ENCODE measurements at regions of chr11 and their contacts with region 1.

Region 1: DNA sequence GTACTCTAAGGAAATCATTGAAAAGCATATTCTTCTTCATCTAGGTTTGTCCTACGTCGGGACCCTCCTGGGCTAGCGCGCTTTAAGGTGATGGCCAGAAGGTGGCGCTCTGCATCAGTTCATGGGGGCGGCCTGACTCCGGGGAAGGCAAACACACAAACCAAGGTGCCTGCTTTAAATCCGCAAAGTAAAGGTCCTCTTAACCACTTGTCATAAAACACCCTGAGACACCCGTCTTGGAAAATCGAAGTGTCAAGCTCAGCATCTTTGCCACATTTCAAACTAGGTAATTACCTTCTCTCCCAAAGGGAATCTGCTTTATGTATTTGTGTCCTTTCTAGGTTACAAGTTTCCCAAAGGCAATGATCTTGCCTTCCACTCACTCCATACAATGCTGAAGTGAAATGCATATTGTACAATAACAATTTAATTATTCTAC is 33.9 kb downstream of the LMO2 start:
- DNase-seq: peak; percentile 64
- H3K27ac ChIP-seq: no peak overlapping the region
- CTCF ChIP-seq: peak; percentile 92

Region 2: GRCh38 chr11:33797879-33798278 is 60.1 kb before region 1 on chr11:
- CTCF ChIA-PET with region 1: no interaction called
- POLR2A ChIA-PET with region 1: no interaction called
- DNase-seq: no peak
- H3K27ac ChIP-seq: no peak overlapping the region
- CTCF ChIP-seq: no peak

Region 3: GRCh38 chr11:33907421-33907820 is 49.5 kb after region 1 on chr11:
- CTCF ChIA-PET with region 1: no interaction called
- POLR2A ChIA-PET with region 1: no interaction called
- DNase-seq: no peak
- H3K27ac ChIP-seq: no peak overlapping the region
- CTCF ChIP-seq: no peak

Region 4: GRCh38 chr11:33970984-33971466 is 113.1 kb after region 1 on chr11:
- CTCF ChIA-PET with region 1: interaction called, 22 read pairs
- POLR2A ChIA-PET with region 1: no interaction called
- DNase-seq: peak; percentile 58
- H3K27ac ChIP-seq: no peak overlapping the region
- CTCF ChIP-seq: peak; percentile 71

Region 5: DNA sequence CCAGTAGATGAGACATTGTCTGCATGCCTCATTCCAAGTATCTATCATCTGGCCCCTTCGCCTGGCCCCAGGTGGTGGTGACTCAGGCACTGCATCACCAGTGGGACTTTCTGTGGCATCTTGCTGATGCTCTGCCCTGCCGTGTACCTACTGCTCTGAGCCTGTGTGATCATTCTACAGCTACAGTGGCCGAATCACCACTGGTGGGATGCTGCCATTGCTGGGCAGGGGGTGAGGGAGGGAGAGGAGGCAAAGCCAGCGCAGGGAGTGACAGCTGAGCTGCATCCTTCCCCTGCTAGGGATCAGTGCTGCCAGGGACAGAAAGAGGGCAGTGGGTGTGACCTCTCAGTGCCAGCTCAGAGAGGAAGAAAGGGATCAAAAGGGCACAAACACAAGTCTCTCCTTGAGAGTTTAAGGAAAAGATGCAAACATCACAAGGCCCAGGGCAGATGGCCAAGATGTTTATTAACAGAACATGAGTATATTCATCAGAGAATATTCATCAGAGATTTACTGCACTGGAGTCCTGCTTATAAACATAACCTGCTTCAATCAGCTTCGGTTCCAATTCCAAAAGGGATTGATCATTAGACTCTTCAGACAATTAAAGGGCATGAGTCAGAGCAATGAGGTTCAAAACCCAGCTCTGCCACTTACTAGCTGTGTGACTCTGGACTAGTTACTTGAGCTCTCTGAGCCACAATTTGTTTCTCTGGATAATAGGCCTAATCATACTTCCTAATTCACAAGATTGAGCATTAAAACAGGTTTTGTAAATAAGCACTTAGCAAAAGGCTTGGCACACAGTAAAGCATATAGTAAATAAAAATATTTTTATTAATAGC is 357.2 kb after region 1 on chr11:
- CTCF ChIA-PET with region 1: no interaction called
- POLR2A ChIA-PET with region 1: no interaction called
- DNase-seq: peak; percentile 74
- H3K27ac ChIP-seq: peak overlapping the region; percentile 58
- CTCF ChIP-seq: no peak

Measured in RWPE1 (cell line).